ENCODE measurements at regions of chr22 and their contacts with region 1.

Region 1: GRCh38 chr22:31107178-31107893 is at the start of gene SELENOM:
- DNase-seq: peak; percentile 89
- ATAC-seq: peak; percentile 95
- H3K4me3 Mint-ChIP-seq: peak within 1 kb of the TSS; percentile 78
- H3K27ac Mint-ChIP-seq: peak within 1 kb of the TSS; percentile 80
- H3K4me1 Mint-ChIP-seq: peaks cover 18% of the 10 kb centered on the region
- H3K27me3 Mint-ChIP-seq: no peaks in the 10 kb centered on the region
- CTCF ChIP-seq: peak; percentile 83
- total RNA-seq, gene SELENOM: 3.6 to 5.8 TPM

Region 2: DNA sequence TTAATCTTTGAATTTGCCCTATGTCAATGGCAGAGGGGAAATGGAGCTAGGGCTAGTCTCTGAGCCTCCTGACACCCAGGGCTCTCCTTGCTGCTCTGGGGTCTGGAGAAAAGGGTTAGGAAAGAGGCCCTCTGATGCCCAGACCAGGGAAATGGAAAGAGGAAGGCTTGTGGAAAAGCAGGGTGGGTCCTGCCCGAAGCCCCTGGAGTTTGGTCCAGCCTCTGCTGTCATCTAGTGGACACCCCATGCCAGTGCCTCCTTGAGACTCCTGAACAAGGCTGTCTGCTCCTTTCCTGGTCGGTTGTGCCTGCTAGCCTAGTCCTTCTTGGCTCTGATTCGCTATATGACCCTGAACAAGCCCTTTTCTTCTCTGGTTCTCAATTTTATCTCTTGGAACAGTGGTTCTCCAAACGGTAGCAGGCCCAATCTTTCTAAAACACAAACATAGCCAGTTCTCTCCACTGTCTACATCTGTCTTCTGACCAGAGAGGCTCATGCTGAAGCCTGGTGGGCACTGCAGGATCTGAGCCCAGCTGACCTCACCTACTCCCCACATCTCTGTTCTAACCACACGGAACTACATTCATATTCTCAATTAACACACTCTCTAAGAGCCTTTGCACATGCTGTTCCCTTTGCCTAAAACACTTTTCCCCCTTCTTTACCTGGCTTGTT is 41.8 kb after region 1 on chr22:
- CTCF ChIA-PET with region 1: interaction called, 12 read pairs
- POLR2A ChIA-PET with region 1: no interaction called
- intact Hi-C with region 1: no loop called
- DNase-seq: peak; percentile 60
- ATAC-seq: peak; percentile 77
- H3K4me3 Mint-ChIP-seq: no peak overlapping the region
- H3K27ac Mint-ChIP-seq: no peak overlapping the region
- H3K4me1 Mint-ChIP-seq: no peaks in the 10 kb centered on the region
- H3K27me3 Mint-ChIP-seq: peaks cover 3% of the 10 kb centered on the region
- CTCF ChIP-seq: peak; percentile 75

Region 3: GRCh38 chr22:31199183-31199582 is 91.8 kb after region 1 on chr22:
- CTCF ChIA-PET with region 1: no interaction called
- POLR2A ChIA-PET with region 1: no interaction called
- intact Hi-C with region 1: no loop called
- DNase-seq: no peak
- ATAC-seq: no peak
- H3K4me3 Mint-ChIP-seq: no peak overlapping the region
- H3K27ac Mint-ChIP-seq: no peak overlapping the region
- H3K4me1 Mint-ChIP-seq: no peaks in the 10 kb centered on the region
- H3K27me3 Mint-ChIP-seq: no peaks in the 10 kb centered on the region
- CTCF ChIP-seq: no peak

Region 4: GRCh38 chr22:31361743-31362142 is 254.4 kb after region 1 on chr22:
- CTCF ChIA-PET with region 1: no interaction called
- POLR2A ChIA-PET with region 1: no interaction called
- intact Hi-C with region 1: no loop called
- DNase-seq: no peak
- ATAC-seq: no peak
- H3K4me3 Mint-ChIP-seq: no peak overlapping the region
- H3K27ac Mint-ChIP-seq: no peak overlapping the region
- H3K4me1 Mint-ChIP-seq: no peaks in the 10 kb centered on the region
- H3K27me3 Mint-ChIP-seq: peaks cover 3% of the 10 kb centered on the region
- CTCF ChIP-seq: no peak

Measured in activated CD8-positive, alpha-beta T cell treated with anti-CD3 and anti-CD28 coated beads for 36 hours (primary cell).